GM10248 (cell line): ENCODE measurements at regions of chr18 and their contacts with region 1.

Region 1: DNA sequence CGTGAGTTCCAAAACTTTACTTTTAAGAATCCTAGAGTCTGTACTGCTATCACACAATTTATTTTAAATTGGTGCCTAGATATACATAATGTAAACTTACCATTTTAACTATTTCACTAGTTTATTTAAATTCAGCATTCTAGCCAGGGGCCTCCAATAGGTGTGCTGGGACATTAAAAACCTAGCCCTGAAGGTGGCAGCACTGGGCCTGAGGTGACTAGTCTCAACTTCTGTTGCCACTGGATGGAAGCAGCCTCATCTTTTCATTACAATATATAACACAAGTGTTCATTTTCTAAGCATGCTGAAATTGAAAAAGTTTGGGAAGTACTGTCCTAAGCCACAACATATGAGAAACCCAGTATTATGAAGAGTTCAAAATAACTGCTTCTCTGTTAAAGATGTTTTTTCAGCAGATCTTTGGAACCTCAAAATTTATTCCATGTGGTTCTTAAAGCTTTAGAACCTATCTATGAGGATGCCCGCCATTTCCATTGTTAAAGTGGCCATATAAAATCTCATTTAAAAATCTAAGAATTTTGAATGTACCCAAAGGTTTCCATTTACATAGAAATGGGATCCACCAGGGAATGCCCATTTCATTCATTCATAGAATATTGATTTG is 2.9 kb upstream of the RBBP8 start:
- DNase-seq: peak; percentile 59
- CTCF ChIP-seq: peak; percentile 73

Region 2: DNA sequence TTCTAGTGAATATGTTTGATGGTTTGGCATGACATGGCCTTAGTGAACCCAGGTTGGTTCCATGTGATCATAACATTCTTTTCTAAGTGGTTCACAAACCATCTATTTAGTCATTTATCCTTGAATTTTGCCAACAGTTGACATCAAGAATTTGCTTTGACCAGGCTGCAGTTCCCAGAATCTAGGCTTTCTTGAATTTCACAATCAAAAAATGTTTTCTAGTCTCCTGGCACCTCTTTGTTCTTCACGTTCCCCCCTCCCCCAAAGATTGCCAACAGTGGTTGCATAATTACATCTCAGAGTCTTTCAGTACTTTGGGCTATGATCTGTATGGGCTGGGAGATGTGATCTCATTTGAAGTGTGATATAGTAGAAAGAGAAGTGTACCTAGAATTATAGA is 636.8 kb before region 1 on chr18:
- CTCF ChIA-PET with region 1: no interaction called
- POLR2A ChIA-PET with region 1: no interaction called
- DNase-seq: no peak
- CTCF ChIP-seq: no peak

Region 3: DNA sequence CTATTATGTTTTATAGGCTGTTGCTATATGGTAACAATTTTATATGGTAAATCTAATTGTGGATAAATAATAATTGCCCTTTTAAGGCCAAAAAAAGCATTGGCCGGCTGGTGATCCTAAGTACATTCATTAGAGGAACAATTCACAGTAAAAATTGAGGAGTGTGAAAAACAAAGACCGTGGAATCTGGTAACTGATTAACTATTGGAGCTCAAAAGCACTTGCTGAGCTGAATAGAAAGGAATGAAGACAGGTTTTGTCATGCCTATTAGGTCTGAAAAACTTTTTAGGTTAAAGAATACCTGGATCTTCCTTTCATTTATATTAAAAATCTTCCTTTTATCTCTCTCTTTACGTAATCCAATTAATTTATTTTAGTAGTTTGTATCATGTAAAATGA is 15.6 kb before region 1 on chr18:
- CTCF ChIA-PET with region 1: interaction called, 14 read pairs
- POLR2A ChIA-PET with region 1: no interaction called
- DNase-seq: no peak
- CTCF ChIP-seq: no peak

Region 4: GRCh38 chr18:22946846-22947245 is 16.6 kb after region 1 on chr18:
- CTCF ChIA-PET with region 1: interaction called, 14 read pairs
- POLR2A ChIA-PET with region 1: no interaction called
- DNase-seq: no peak
- CTCF ChIP-seq: no peak

Region 5: GRCh38 chr18:22961156-22961555 is 31.0 kb after region 1 on chr18:
- CTCF ChIA-PET with region 1: interaction called, 21 read pairs
- POLR2A ChIA-PET with region 1: no interaction called
- DNase-seq: no peak
- CTCF ChIP-seq: no peak

Region 6: DNA sequence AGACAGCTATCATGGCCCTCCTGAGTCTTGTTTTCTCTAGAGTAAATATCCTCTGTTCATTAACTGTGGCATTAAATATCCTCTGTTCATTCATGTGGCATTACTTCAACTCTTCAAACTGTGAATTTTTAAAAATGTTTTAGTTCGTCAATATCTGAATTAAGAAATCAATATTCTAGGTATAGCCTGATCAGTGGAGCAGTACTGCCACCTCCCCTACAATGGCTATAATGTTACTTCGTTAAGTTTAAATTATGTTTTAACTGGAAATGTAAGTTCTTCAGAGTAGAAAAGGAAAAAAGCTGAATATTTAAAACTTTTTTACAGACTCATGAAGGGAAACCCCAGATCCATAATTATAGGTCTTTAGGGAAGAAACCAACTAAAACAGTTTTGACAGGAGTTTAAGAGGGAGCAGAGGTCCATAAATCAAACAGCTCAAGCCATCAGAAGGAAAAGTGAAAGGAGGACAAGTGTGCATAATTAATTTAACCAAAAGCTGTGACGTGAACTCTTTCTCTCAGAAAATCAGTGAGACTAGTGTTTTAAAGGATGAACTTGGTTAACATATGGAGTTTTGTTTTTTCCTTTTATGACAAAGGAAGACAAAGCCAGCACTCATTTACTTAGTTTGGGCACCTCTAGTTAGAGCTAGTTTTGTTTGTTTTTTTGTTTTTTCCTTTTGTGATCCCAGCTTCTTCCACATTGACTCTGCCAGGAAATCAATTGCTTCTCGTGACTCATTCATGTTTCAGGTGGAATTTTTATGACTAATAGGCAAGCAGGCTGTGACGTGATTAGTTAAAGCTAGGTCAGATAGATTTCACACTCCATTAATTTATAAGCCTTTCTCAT is 47.9 kb after region 1 on chr18:
- CTCF ChIA-PET with region 1: interaction called, 38 read pairs
- POLR2A ChIA-PET with region 1: no interaction called
- DNase-seq: no peak
- CTCF ChIP-seq: no peak

Region 7: DNA sequence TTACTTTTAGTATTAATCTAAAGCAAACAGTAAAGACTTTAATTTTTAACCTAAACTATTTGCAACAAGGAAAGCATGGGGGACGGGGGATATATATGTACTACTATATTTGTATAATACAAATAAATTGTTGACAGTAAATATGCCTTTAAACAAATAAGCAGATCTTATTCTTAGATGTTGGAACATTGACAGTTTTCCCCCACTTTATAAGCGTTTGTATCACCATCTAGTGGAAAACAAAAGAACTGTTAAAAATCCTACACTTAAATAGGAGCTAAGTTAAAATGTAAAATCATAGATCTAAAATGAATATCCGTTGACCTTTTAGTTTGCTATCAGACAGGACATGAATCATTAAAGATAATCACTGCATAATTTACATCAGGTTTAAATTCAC is 53.0 kb after region 1 on chr18:
- CTCF ChIA-PET with region 1: interaction called, 38 read pairs
- POLR2A ChIA-PET with region 1: no interaction called
- DNase-seq: peak; percentile 20
- CTCF ChIP-seq: peak; percentile 29

Region 8: GRCh38 chr18:23412351-23412964 is 482.3 kb after region 1 on chr18:
- CTCF ChIA-PET with region 1: interaction called, 12 read pairs
- POLR2A ChIA-PET with region 1: no interaction called
- DNase-seq: no peak
- CTCF ChIP-seq: no peak